Mammary epithelial cell (primary cell): ENCODE measurements at regions of chr20 and their contacts with region 1.

Region 1: GRCh38 chr20:11178946-11179654 is 505.3 kb upstream of the JAG1 start:
- DNase-seq: peak; percentile 98
- H3K4me3 ChIP-seq: peak overlapping the region in 1 of 3 experiments; percentile 22
- H3K27ac ChIP-seq: peak overlapping the region; percentile 92
- H3K4me1 ChIP-seq: peaks cover 17% of the 10 kb centered on the region
- H3K27me3 ChIP-seq: no peaks in the 10 kb centered on the region
- CTCF ChIP-seq: peak; percentile 36 to 38

Region 2: DNA sequence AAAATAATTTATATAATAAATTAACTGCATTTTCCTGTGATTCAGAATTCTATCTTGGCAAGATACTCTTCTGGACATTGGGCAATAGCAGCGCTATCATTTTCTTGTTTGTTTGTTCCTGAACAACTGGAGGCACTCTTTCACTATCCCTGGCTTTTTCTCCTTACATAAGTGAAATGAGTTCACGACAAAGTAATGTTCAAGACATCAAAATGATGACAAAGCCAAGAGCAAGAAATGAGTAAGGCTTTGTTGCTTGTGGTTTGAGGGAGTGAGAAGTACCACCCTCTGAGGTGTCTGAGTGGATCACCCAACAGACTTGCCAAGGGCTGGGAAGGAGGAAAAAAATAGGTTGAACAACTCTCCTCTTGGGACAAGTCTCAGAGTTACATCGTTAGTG is 38.7 kb before region 1 on chr20:
- CTCF ChIA-PET with region 1: no interaction called
- dilution Hi-C with region 1: no loop called
- in situ Hi-C with region 1: no loop called
- intact Hi-C with region 1: loop called (anchors 1 kb)
- DNase-seq: peak; percentile 98
- H3K4me3 ChIP-seq: no peak overlapping the region
- H3K27ac ChIP-seq: peak overlapping the region; percentile 74
- H3K4me1 ChIP-seq: peaks cover 21% of the 10 kb centered on the region
- H3K27me3 ChIP-seq: no peaks in the 10 kb centered on the region
- CTCF ChIP-seq: peak in 1 of 2 donors; percentile 42